ENCODE measurements at regions of chr1 and their contacts with region 1.

Region 1: GRCh38 chr1:212608209-212608955 is at the start of gene ATF3:
- DNase-seq: peak; percentile 49 to 92 (median 69)
- ATAC-seq: peak; percentile 69
- H3K4me3 ChIP-seq: peak within 1 kb of the TSS; percentile 82
- H3K4me3 Mint-ChIP-seq: peak within 1 kb of the TSS; percentile 97
- H3K27ac ChIP-seq: no peak within 1 kb of the TSS
- H3K27ac Mint-ChIP-seq: peak within 1 kb of the TSS; percentile 78
- H3K4me1 ChIP-seq: peaks cover 38% of the 10 kb centered on the region
- H3K4me1 Mint-ChIP-seq: peaks cover 36% of the 10 kb centered on the region
- H3K27me3 ChIP-seq: peaks cover 59% of the 10 kb centered on the region in 2 experiments
- H3K27me3 Mint-ChIP-seq: peaks cover 86% of the 10 kb centered on the region
- CTCF ChIP-seq: no peak
- total RNA-seq, gene ATF3: 10.4 to 12.7 TPM

Region 2: GRCh38 chr1:212566522-212567479 is 41.6 kb before region 1 on chr1:
- CTCF ChIA-PET with region 1: interaction called, 3 read pairs
- POLR2A ChIA-PET with region 1: no interaction called
- intact Hi-C with region 1: loop called in 1 of 2 experiments (anchors 5 kb)
- DNase-seq: peak in 13 of 14 experiments; percentile 11 to 80 (median 46)
- ATAC-seq: peak; percentile 99
- H3K4me3 ChIP-seq: peak overlapping the region; percentile 66
- H3K4me3 Mint-ChIP-seq: peak overlapping the region; percentile 99
- H3K27ac ChIP-seq: no peak overlapping the region
- H3K27ac Mint-ChIP-seq: peak overlapping the region; percentile 62
- H3K4me1 ChIP-seq: peaks cover 6% of the 10 kb centered on the region
- H3K4me1 Mint-ChIP-seq: peaks cover 16% of the 10 kb centered on the region
- H3K27me3 ChIP-seq: no peaks in the 10 kb centered on the region
- H3K27me3 Mint-ChIP-seq: peaks cover under 1% of the 10 kb centered on the region
- CTCF ChIP-seq: no peak

Region 3: GRCh38 chr1:213987927-213988506 is 1379.6 kb after region 1 on chr1 and contains the start of gene PROX1:
- CTCF ChIA-PET with region 1: no interaction called
- POLR2A ChIA-PET with region 1: no interaction called
- intact Hi-C with region 1: loop called in 1 of 2 experiments (anchors 10 kb)
- DNase-seq: peak in 10 of 14 experiments; percentile 21 to 70 (median 44)
- ATAC-seq: peak; percentile 87
- H3K4me3 ChIP-seq: peak within 1 kb of the TSS; percentile 44
- H3K4me3 Mint-ChIP-seq: peak within 1 kb of the TSS; percentile 92
- H3K27ac ChIP-seq: no peak within 1 kb of the TSS
- H3K27ac Mint-ChIP-seq: peak within 1 kb of the TSS; percentile 85
- H3K4me1 ChIP-seq: peaks cover 42% of the 10 kb centered on the region
- H3K4me1 Mint-ChIP-seq: peaks cover 58% of the 10 kb centered on the region
- H3K27me3 ChIP-seq: peaks cover 69 to 97% of the 10 kb centered on the region in 2 experiments
- H3K27me3 Mint-ChIP-seq: peaks cover 100% of the 10 kb centered on the region
- CTCF ChIP-seq: no peak
- total RNA-seq, gene PROX1: 0.03 TPM in 1 of 2 experiments, not detected in the other